GM12878 (cell line): ENCODE measurements at regions of chr14 and their contacts with region 1.

Region 1: GRCh38 chr14:33617190-33617622 is 333.7 kb downstream of the EGLN3 start:
- DNase-seq: no peak
- ATAC-seq: no peak
- H3K4me3 ChIP-seq: no peak overlapping the region
- H3K27ac ChIP-seq: no peak overlapping the region
- H3K4me1 ChIP-seq: no peaks in the 10 kb centered on the region
- H3K27me3 ChIP-seq: no peaks in the 10 kb centered on the region
- CTCF ChIP-seq: no peak
- EP300 ChIP-seq: no peak
- POLR2A ChIP-seq: no peak
- RAD21 ChIP-seq: no peak

Region 2: DNA sequence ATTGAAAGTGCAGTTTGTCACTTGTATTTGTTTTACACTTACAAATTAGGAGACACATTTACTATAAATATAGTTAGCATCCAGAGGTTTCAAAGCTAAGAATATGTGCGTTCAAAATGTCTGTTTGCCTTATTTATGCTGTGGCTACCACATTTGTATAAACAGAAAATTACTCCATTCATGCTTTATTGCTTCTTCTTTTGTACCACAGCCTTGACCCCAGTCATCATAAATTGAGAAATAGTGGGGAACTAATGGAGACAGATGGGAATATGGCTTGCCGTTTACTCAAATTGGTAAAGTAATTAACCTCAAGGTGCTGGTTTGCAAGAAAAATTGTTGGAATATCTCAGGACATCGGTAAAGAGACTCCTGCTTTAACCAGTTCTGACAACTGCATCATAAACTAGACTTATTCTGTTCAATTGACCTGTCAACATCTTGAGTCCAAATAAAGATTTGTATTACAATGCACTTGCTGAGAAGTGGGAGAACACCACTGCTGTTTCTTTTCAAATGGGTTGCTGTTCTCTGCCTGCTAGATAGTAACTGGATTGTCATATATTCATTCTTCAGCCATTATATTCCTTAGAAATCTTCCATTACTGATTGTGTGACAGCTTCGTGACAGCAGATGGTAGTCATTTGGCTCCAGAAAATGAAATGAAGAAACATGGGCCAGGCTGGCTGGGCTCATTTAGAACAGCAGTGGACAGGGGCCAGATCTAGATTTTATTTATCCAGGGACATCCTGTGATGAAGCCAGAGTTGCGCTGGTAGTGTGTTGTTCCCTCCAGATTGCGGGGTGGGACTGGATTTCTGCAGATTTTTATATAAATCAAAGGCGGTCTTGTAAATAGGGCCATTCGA is 20.8 kb before region 1 on chr14:
- CTCF ChIA-PET with region 1: interaction called, 4 read pairs
- POLR2A ChIA-PET with region 1: interaction called, 4 read pairs
- RAD21 ChIA-PET with region 1: interaction called, 6 read pairs
- SMC1A ChIA-PET with region 1: interaction called, 25 read pairs
- in situ Hi-C with region 1: no loop called
- intact Hi-C with region 1: no loop called
- DNase-seq: no peak
- ATAC-seq: no peak
- H3K4me3 ChIP-seq: no peak overlapping the region
- H3K27ac ChIP-seq: no peak overlapping the region
- H3K4me1 ChIP-seq: no peaks in the 10 kb centered on the region
- H3K27me3 ChIP-seq: no peaks in the 10 kb centered on the region; a peak in 1 of 4 replicates
- CTCF ChIP-seq: no peak
- EP300 ChIP-seq: no peak
- POLR2A ChIP-seq: no peak
- RAD21 ChIP-seq: no peak

Region 3: GRCh38 chr14:33737446-33737845 is 120.2 kb after region 1 on chr14:
- CTCF ChIA-PET with region 1: no interaction called
- POLR2A ChIA-PET with region 1: no interaction called
- RAD21 ChIA-PET with region 1: no interaction called
- SMC1A ChIA-PET with region 1: no interaction called
- in situ Hi-C with region 1: no loop called
- intact Hi-C with region 1: no loop called
- DNase-seq: no peak
- ATAC-seq: no peak
- H3K4me3 ChIP-seq: no peak overlapping the region
- H3K27ac ChIP-seq: no peak overlapping the region
- H3K4me1 ChIP-seq: no peaks in the 10 kb centered on the region
- H3K27me3 ChIP-seq: no peaks in the 10 kb centered on the region
- CTCF ChIP-seq: no peak
- EP300 ChIP-seq: no peak
- POLR2A ChIP-seq: no peak
- RAD21 ChIP-seq: no peak